Activated B cell treated with CpG ODN at 0.5 μM for 24 hours (primary cell): ENCODE measurements at regions of chr22 and their contacts with region 1.

Region 1: DNA sequence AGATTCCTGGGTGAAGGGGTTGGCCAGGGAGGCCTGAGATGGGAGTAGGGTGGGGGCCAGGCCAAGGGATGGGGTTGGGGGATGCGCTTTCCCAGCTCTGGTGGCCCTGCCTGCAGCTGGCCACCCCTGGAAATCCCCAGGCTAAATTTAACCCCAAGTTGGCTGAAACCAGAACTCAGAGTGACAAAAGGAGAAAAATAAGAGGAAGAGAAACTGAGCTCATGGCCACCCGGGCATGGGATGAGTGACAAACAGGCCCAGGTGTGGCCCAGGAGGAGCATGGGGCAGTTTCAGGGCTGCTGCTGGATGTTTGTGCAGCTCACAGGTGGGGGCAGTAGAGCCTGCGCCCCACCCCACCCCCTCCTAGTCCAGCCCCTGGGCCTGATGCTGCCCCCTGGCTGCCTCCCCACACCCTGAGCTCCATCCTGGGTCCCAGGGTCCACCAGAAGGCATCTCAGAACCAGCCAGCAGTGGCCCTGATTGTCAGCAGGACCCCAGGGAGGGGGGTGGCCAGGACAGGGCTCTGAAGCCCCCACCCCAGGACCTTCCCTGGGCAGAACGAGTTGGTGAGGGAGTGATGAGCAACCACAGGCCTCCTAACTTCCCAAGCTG is 48.0 kb downstream of the IGLL5 start:
- DNase-seq: peak; percentile 77
- ATAC-seq: peak; percentile 87
- H3K4me3 Mint-ChIP-seq: peak overlapping the region; percentile 59
- H3K27ac Mint-ChIP-seq: peak overlapping the region; percentile 96
- H3K4me1 Mint-ChIP-seq: peaks cover 98% of the 10 kb centered on the region
- H3K27me3 Mint-ChIP-seq: no peaks in the 10 kb centered on the region
- CTCF ChIP-seq: no peak

Region 2: GRCh38 chr22:22168190-22168940 is 767.3 kb before region 1 on chr22:
- CTCF ChIA-PET with region 1: no interaction called
- POLR2A ChIA-PET with region 1: interaction called, 8 read pairs
- intact Hi-C with region 1: loop called (anchors 1 kb)
- DNase-seq: peak; percentile 31
- ATAC-seq: peak; percentile 54
- H3K4me3 Mint-ChIP-seq: peak overlapping the region; percentile 84
- H3K27ac Mint-ChIP-seq: peak overlapping the region; percentile 97
- H3K4me1 Mint-ChIP-seq: peaks cover 86% of the 10 kb centered on the region
- H3K27me3 Mint-ChIP-seq: no peaks in the 10 kb centered on the region
- CTCF ChIP-seq: no peak

Region 3: GRCh38 chr22:22687638-22688500 is 247.8 kb before region 1 on chr22:
- CTCF ChIA-PET with region 1: interaction called, 4 read pairs
- POLR2A ChIA-PET with region 1: interaction called, 16 read pairs
- intact Hi-C with region 1: no loop called
- DNase-seq: no peak
- ATAC-seq: no peak
- H3K4me3 Mint-ChIP-seq: peak overlapping the region; percentile 30
- H3K27ac Mint-ChIP-seq: no peak overlapping the region
- H3K4me1 Mint-ChIP-seq: peaks cover 55% of the 10 kb centered on the region
- H3K27me3 Mint-ChIP-seq: no peaks in the 10 kb centered on the region
- CTCF ChIP-seq: peak; percentile 22

Region 4: GRCh38 chr22:22753526-22754267 is 182.0 kb before region 1 on chr22:
- CTCF ChIA-PET with region 1: interaction called, 9 read pairs
- POLR2A ChIA-PET with region 1: interaction called, 8 read pairs
- intact Hi-C with region 1: loop called (anchors 5 kb)
- DNase-seq: peak; percentile 55
- ATAC-seq: peak; percentile 89
- H3K4me3 Mint-ChIP-seq: no peak overlapping the region
- H3K27ac Mint-ChIP-seq: peak overlapping the region; percentile 24
- H3K4me1 Mint-ChIP-seq: peaks cover 26% of the 10 kb centered on the region
- H3K27me3 Mint-ChIP-seq: no peaks in the 10 kb centered on the region
- CTCF ChIP-seq: no peak

Region 5: GRCh38 chr22:22848364-22848866 is 87.2 kb before region 1 on chr22:
- CTCF ChIA-PET with region 1: interaction called, 53 read pairs
- POLR2A ChIA-PET with region 1: interaction called, 9 read pairs
- intact Hi-C with region 1: no loop called
- DNase-seq: peak; percentile 62
- ATAC-seq: peak; percentile 67
- H3K4me3 Mint-ChIP-seq: no peak overlapping the region
- H3K27ac Mint-ChIP-seq: no peak overlapping the region
- H3K4me1 Mint-ChIP-seq: peaks cover 39% of the 10 kb centered on the region
- H3K27me3 Mint-ChIP-seq: peaks cover 10% of the 10 kb centered on the region
- CTCF ChIP-seq: peak; percentile 79

Region 6: GRCh38 chr22:22865311-22866072 is 70.2 kb before region 1 on chr22:
- CTCF ChIA-PET with region 1: interaction called, 9 read pairs
- POLR2A ChIA-PET with region 1: interaction called, 14 read pairs
- intact Hi-C with region 1: no loop called
- DNase-seq: no peak
- ATAC-seq: peak; percentile 83
- H3K4me3 Mint-ChIP-seq: no peak overlapping the region
- H3K27ac Mint-ChIP-seq: peak overlapping the region; percentile 36
- H3K4me1 Mint-ChIP-seq: peaks cover 48% of the 10 kb centered on the region
- H3K27me3 Mint-ChIP-seq: peaks cover 4% of the 10 kb centered on the region
- CTCF ChIP-seq: no peak

Region 7: GRCh38 chr22:22903355-22903777 is 32.3 kb before region 1 on chr22:
- CTCF ChIA-PET with region 1: interaction called, 26 read pairs
- POLR2A ChIA-PET with region 1: interaction called, 427 read pairs
- intact Hi-C with region 1: no loop called
- DNase-seq: no peak
- ATAC-seq: no peak
- H3K4me3 Mint-ChIP-seq: peak overlapping the region; percentile 87
- H3K27ac Mint-ChIP-seq: peak overlapping the region; percentile 76
- H3K4me1 Mint-ChIP-seq: peaks cover 66% of the 10 kb centered on the region
- H3K27me3 Mint-ChIP-seq: no peaks in the 10 kb centered on the region
- CTCF ChIP-seq: no peak

Region 8: GRCh38 chr22:22981670-22982571 is 46.3 kb after region 1 on chr22:
- CTCF ChIA-PET with region 1: no interaction called
- POLR2A ChIA-PET with region 1: no interaction called
- intact Hi-C with region 1: no loop called
- DNase-seq: no peak
- ATAC-seq: peak; percentile 98
- H3K4me3 Mint-ChIP-seq: no peak overlapping the region
- H3K27ac Mint-ChIP-seq: no peak overlapping the region
- H3K4me1 Mint-ChIP-seq: peaks cover 16% of the 10 kb centered on the region
- H3K27me3 Mint-ChIP-seq: no peaks in the 10 kb centered on the region
- CTCF ChIP-seq: no peak